ENCODE measurements at regions of chr15 and their contacts with region 1.

Region 1: GRCh38 chr15:68924866-68925560 is 5.3 kb upstream of the SPESP1 start:
- DNase-seq: peak; percentile 65
- H3K4me3 ChIP-seq: no peak overlapping the region
- H3K27ac ChIP-seq: no peak overlapping the region
- H3K4me1 ChIP-seq: no peaks in the 10 kb centered on the region
- H3K27me3 ChIP-seq: no peaks in the 10 kb centered on the region
- CTCF ChIP-seq: peak; percentile 69

Region 2: DNA sequence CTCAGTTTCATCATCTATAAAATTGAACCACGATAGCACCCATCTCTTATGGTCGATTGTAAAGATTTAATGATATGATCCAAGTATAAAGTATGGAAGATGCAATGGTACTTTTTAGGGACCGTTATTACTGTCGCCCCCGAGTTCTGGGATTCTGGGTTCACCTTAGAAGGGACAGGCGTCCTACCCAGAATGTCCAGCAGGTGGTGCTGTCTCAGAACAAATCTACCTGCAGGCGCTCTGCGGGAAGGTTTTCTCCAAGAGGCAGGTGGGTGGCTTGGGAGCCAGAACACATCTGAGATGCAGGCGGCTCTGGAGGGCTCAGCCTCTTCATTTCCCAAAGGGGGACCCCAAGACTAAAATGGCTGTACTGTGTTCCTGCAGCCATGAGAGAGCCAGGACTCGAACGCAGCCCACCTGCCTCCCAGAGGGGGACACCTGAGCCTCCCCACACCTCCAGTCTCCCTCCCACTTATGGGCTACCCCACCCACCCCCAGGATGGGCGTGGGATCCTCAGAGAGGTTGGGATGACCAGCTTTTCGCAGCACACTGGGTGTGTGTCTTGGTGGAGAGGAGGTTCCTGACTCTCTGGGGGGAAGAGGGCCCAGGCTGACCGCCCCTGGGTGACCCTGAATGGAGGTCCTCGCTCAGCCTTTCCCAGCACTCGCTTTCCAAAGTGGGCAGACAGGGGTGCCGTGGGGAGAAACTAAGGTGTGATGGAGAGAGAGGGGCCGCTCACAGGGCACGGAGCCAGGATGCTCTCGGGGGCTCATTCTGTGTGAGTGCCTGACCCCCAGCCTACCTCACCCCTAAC is 374.3 kb before region 1 on chr15:
- intact Hi-C with region 1: loop called (anchors 5 kb)
- DNase-seq: peak; percentile 77
- H3K4me3 ChIP-seq: no peak overlapping the region
- H3K27ac ChIP-seq: no peak overlapping the region
- H3K4me1 ChIP-seq: no peaks in the 10 kb centered on the region
- H3K27me3 ChIP-seq: no peaks in the 10 kb centered on the region
- CTCF ChIP-seq: peak; percentile 92

Region 3: GRCh38 chr15:68797599-68798345 is 127.2 kb before region 1 on chr15:
- intact Hi-C with region 1: no loop called
- DNase-seq: no peak
- H3K4me3 ChIP-seq: no peak overlapping the region
- H3K27ac ChIP-seq: no peak overlapping the region
- H3K4me1 ChIP-seq: peaks cover 17% of the 10 kb centered on the region
- H3K27me3 ChIP-seq: no peaks in the 10 kb centered on the region
- CTCF ChIP-seq: no peak